K562 (cell line): ENCODE measurements at regions of chr10 and their contacts with region 1.

Region 1: DNA sequence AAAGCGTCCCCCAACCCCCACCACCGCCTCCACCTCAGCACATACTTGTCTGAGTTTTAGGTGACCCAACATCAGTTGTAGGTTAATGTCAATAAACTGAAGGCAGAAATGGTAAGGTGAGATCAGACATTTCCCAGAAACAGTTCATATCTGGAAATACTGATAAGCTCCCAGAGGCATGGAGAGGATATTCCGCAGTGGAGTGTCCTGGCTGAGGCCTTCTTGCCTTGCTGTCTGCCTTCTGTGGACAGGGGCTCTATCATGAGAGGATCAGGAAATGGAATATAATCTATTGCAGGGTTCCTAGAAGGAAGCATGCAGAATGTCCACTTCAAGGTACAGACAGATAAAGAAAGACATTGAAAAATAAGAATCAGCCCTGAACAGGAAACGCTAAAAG is 473.3 kb upstream of the MKI67 start:
- DNase-seq: peak; percentile 76 to 90 (median 80)
- ATAC-seq: peak; percentile 92
- H3K4me3 ChIP-seq: no peak overlapping the region
- H3K27ac ChIP-seq: peak overlapping the region; percentile 70
- H3K4me1 ChIP-seq: peaks cover 0 to 15% of the 10 kb centered on the region in 2 experiments; a peak in 3 of 5 replicates
- H3K27me3 ChIP-seq: no peaks in the 10 kb centered on the region
- CTCF ChIP-seq: no peak
- EP300 ChIP-seq: peak; percentile 93
- POLR2A ChIP-seq: no peak
- RAD21 ChIP-seq: no peak

Region 2: GRCh38 chr10:128588402-128588801 is 11.1 kb before region 1 on chr10:
- CTCF ChIA-PET with region 1: no interaction called
- POLR2A ChIA-PET with region 1: no interaction called
- in situ Hi-C with region 1: no loop called
- intact Hi-C with region 1: no loop called
- DNase-seq: no peak
- ATAC-seq: no peak
- H3K4me3 ChIP-seq: no peak overlapping the region
- H3K27ac ChIP-seq: no peak overlapping the region
- H3K4me1 ChIP-seq: no peaks in the 10 kb centered on the region; a peak in 2 of 5 replicates
- H3K27me3 ChIP-seq: no peaks in the 10 kb centered on the region
- CTCF ChIP-seq: no peak
- EP300 ChIP-seq: no peak
- POLR2A ChIP-seq: no peak
- RAD21 ChIP-seq: no peak

Region 3: GRCh38 chr10:128631801-128632241 is 32.3 kb after region 1 on chr10:
- CTCF ChIA-PET with region 1: no interaction called
- POLR2A ChIA-PET with region 1: no interaction called
- in situ Hi-C with region 1: no loop called
- intact Hi-C with region 1: loop called (anchors 1 kb)
- DNase-seq: peak in 2 of 4 experiments; percentile 14 to 30
- ATAC-seq: no peak
- H3K4me3 ChIP-seq: no peak overlapping the region
- H3K27ac ChIP-seq: no peak overlapping the region
- H3K4me1 ChIP-seq: peaks cover 10 to 12% of the 10 kb centered on the region in 2 experiments; a peak in 4 of 5 replicates
- H3K27me3 ChIP-seq: no peaks in the 10 kb centered on the region
- CTCF ChIP-seq: peak; percentile 22 to 46 (median 43); a peak in 4 of 6 replicates
- EP300 ChIP-seq: no peak
- POLR2A ChIP-seq: no peak
- RAD21 ChIP-seq: no peak

Region 4: GRCh38 chr10:129244757-129245156 is 645.2 kb after region 1 on chr10:
- CTCF ChIA-PET with region 1: no interaction called
- POLR2A ChIA-PET with region 1: no interaction called
- in situ Hi-C with region 1: no loop called
- intact Hi-C with region 1: no loop called
- DNase-seq: no peak
- ATAC-seq: no peak
- H3K4me3 ChIP-seq: no peak overlapping the region
- H3K27ac ChIP-seq: no peak overlapping the region
- H3K4me1 ChIP-seq: no peaks in the 10 kb centered on the region
- H3K27me3 ChIP-seq: peaks cover 0 to 9% of the 10 kb centered on the region in 2 experiments; a peak in 1 of 5 replicates
- CTCF ChIP-seq: no peak
- EP300 ChIP-seq: no peak
- POLR2A ChIP-seq: no peak
- RAD21 ChIP-seq: no peak